PC-9 (cell line): ENCODE measurements at regions of chr4 and their contacts with region 1.

Region 1: GRCh38 chr4:110361921-110362320 is 114.0 kb upstream of the ENPEP start:
- DNase-seq: peak; percentile 53 to 87
- H3K4me3 ChIP-seq: peak overlapping the region; percentile 38; the same call in 1 of the 2 replicates
- H3K27ac ChIP-seq: peak overlapping the region; percentile 71
- H3K4me1 ChIP-seq: peaks cover 31% of the 10 kb centered on the region
- H3K27me3 ChIP-seq: no peaks in the 10 kb centered on the region
- CTCF ChIP-seq: no peak

Region 2: GRCh38 chr4:110310795-110311194 is 51.1 kb before region 1 on chr4:
- CTCF ChIA-PET with region 1: no interaction called
- POLR2A ChIA-PET with region 1: no interaction called
- intact Hi-C with region 1: loop called (anchors 5 kb)
- DNase-seq: no peak
- H3K4me3 ChIP-seq: no peak overlapping the region
- H3K27ac ChIP-seq: no peak overlapping the region
- H3K4me1 ChIP-seq: no peaks in the 10 kb centered on the region
- H3K27me3 ChIP-seq: no peaks in the 10 kb centered on the region
- CTCF ChIP-seq: no peak